Mucosa of descending colon (tissue), 3 donors: ENCODE measurements at regions of chr17 and their contacts with region 1.

Region 1: GRCh38 chr17:67376737-67377487 is at the start of gene PITPNC1:
- DNase-seq: peak; percentile 87 to 91 (median 89)
- ATAC-seq: peak; percentile 79
- H3K4me3 ChIP-seq: peak within 1 kb of the TSS; percentile 63
- H3K4me1 ChIP-seq: no peaks in the 10 kb centered on the region
- CTCF ChIP-seq: no peak
- total RNA-seq, gene PITPNC1: 10.7 to 11.4 (median 10.9) TPM

Region 2: GRCh38 chr17:67200720-67201301 is 176.1 kb before region 1 on chr17:
- intact Hi-C with region 1: no loop called
- DNase-seq: no peak
- ATAC-seq: peak; percentile 42
- H3K4me3 ChIP-seq: no peak overlapping the region
- H3K4me1 ChIP-seq: no peaks in the 10 kb centered on the region
- CTCF ChIP-seq: no peak

Region 3: GRCh38 chr17:67475236-67475937 is 98.5 kb after region 1 on chr17:
- intact Hi-C with region 1: loop called (anchors 5 kb)
- DNase-seq: peak; percentile 84 to 92 (median 89)
- ATAC-seq: peak; percentile 96
- H3K4me3 ChIP-seq: no peak overlapping the region
- H3K4me1 ChIP-seq: peaks cover 6% of the 10 kb centered on the region
- CTCF ChIP-seq: peak; percentile 89

Region 4: GRCh38 chr17:67481808-67482207 is 104.9 kb after region 1 on chr17:
- intact Hi-C with region 1: loop called (anchors 5 kb)
- DNase-seq: no peak
- ATAC-seq: peak; percentile 33
- H3K4me3 ChIP-seq: no peak overlapping the region
- H3K4me1 ChIP-seq: no peaks in the 10 kb centered on the region
- CTCF ChIP-seq: no peak

Region 5: GRCh38 chr17:67509390-67510289 is 132.7 kb after region 1 on chr17:
- intact Hi-C with region 1: loop called in 1 of 2 experiments (anchors 10 kb)
- DNase-seq: no peak
- ATAC-seq: peak; percentile 69
- H3K4me3 ChIP-seq: no peak overlapping the region
- H3K4me1 ChIP-seq: no peaks in the 10 kb centered on the region
- CTCF ChIP-seq: no peak

Region 6: GRCh38 chr17:67689534-67690177 is 312.7 kb after region 1 on chr17:
- intact Hi-C with region 1: loop called in 1 of 2 experiments (anchors 10 kb)
- DNase-seq: peak in 1 of 3 donors; percentile 82
- ATAC-seq: peak; percentile 67
- H3K4me3 ChIP-seq: no peak overlapping the region
- H3K4me1 ChIP-seq: no peaks in the 10 kb centered on the region
- CTCF ChIP-seq: peak; percentile 46